ENCODE measurements at regions of chr6 and their contacts with region 1.

Region 1: GRCh38 chr6:99520855-99521632 is 5.8 kb upstream of the USP45 start:
- DNase-seq: peak; percentile 78
- ATAC-seq: peak; percentile 91
- H3K4me3 ChIP-seq: peak overlapping the region; percentile 95
- H3K27ac ChIP-seq: peak overlapping the region; percentile 12; the same call in 1 of the 2 replicates
- H3K4me1 ChIP-seq: peaks cover 14% of the 10 kb centered on the region; the same call in 1 of the 2 replicates
- H3K27me3 ChIP-seq: no peaks in the 10 kb centered on the region
- CTCF ChIP-seq: peak; percentile 74

Region 2: GRCh38 chr6:99425647-99426453 is 95.2 kb before region 1 on chr6:
- CTCF ChIA-PET with region 1: no interaction called
- POLR2A ChIA-PET with region 1: no interaction called
- intact Hi-C with region 1: loop called (anchors 5 kb)
- DNase-seq: peak; percentile 70
- ATAC-seq: peak; percentile 65
- H3K4me3 ChIP-seq: peak overlapping the region; percentile 82
- H3K27ac ChIP-seq: peak overlapping the region; percentile 83
- H3K4me1 ChIP-seq: peaks cover 25% of the 10 kb centered on the region
- H3K27me3 ChIP-seq: no peaks in the 10 kb centered on the region
- CTCF ChIP-seq: peak; percentile 49

Region 3: DNA sequence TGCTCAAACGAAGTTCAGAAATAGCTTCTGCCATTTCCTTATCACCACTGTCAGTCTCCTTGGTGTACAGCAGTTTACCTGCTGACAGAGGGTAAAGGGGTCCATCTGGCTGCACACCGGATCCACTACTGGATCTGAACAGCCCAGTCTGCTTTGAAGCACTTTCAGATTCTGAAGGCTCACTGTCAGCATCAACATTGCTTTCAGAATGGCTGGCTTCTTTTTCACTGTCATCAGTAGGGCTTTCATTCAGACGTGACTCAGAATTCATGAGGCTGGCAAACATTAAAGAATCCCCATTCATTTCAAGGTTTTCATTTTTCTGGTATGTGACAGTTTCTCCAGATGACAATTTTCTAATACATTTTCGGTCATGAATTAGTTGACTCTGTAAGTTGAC is 75.0 kb before region 1 on chr6:
- CTCF ChIA-PET with region 1: no interaction called
- POLR2A ChIA-PET with region 1: no interaction called
- intact Hi-C with region 1: no loop called
- DNase-seq: no peak
- ATAC-seq: no peak
- H3K4me3 ChIP-seq: no peak overlapping the region
- H3K27ac ChIP-seq: no peak overlapping the region
- H3K4me1 ChIP-seq: no peaks in the 10 kb centered on the region
- H3K27me3 ChIP-seq: no peaks in the 10 kb centered on the region
- CTCF ChIP-seq: no peak

Region 4: DNA sequence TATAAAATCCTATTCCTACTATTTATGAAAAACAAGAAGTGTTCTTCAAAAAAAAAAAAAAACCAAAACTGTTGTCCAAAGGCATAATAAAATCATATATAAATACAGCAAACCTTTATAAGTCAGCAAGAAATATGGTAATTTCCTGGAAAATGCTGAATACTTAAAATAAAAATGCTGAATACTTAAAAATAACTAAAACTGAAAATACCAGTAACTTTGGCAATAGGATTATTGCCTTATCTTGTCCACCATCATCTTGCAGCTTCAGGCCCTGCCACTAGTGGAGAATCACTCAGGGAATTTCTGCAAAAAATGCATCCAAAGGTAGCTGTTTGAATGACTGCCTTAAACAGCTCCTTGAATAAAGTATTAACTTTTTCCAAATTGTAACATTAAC is 22.9 kb after region 1 on chr6:
- CTCF ChIA-PET with region 1: no interaction called
- POLR2A ChIA-PET with region 1: interaction called, 10 read pairs
- intact Hi-C with region 1: no loop called
- DNase-seq: no peak
- ATAC-seq: no peak
- H3K4me3 ChIP-seq: no peak overlapping the region
- H3K27ac ChIP-seq: no peak overlapping the region
- H3K4me1 ChIP-seq: no peaks in the 10 kb centered on the region
- H3K27me3 ChIP-seq: no peaks in the 10 kb centered on the region
- CTCF ChIP-seq: no peak

Region 5: DNA sequence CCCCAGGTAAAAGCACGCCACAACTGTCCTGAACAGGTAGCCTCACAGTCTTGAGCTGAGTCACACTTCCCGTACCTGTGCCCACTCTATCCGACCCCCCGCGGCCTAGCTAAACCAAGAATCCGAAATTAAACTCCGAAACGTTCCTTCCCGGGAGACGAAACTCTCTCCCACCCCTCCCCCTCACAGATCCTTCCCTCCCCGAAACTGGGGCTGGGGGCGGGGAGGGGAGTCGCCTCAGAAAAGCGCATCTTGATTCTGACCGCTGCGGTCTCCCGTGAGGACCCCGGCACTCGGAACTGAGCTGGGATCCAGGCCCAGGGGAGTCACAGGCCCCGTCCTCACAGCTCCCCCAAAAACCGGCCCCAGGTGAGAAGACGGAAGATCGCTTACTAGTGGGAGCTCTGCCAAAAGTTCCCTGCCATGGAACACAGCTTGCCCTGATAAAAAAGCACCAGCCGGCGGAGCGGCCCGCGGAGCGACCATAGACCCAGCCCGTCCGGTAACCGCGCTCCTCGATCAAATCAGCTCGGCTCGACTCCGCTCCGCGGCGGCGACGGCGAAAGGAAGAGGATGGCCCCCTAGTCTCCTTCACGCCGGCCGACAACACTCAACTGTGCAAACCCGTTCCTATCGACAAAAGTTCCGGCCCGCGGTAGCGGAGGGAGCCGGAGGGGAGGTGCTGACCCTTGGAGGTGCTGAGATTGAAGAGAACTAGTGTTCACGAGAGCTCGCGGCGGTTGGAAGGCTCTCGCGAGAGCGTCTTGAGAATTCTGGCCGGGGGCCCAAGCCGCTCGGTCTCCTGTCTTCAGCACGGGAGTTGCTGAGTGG is 47.3 kb after region 1 on chr6 and contains the start of gene CCNC:
- CTCF ChIA-PET with region 1: interaction called, 6 read pairs
- POLR2A ChIA-PET with region 1: no interaction called
- intact Hi-C with region 1: loop called (anchors 5 kb)
- DNase-seq: peak; percentile 95
- ATAC-seq: peak; percentile 98
- H3K4me3 ChIP-seq: peak within 1 kb of the TSS; percentile 94
- H3K27ac ChIP-seq: peak within 1 kb of the TSS; percentile 76
- H3K4me1 ChIP-seq: peaks cover 12% of the 10 kb centered on the region; the same call in 1 of the 2 replicates
- H3K27me3 ChIP-seq: no peaks in the 10 kb centered on the region
- CTCF ChIP-seq: no peak
- total RNA-seq, gene CCNC: 53.7 and 69.3 TPM in 2 replicates

Measured in PC-3 (cell line).